ENCODE measurements at regions of chr10 and their contacts with region 1.

Region 1: DNA sequence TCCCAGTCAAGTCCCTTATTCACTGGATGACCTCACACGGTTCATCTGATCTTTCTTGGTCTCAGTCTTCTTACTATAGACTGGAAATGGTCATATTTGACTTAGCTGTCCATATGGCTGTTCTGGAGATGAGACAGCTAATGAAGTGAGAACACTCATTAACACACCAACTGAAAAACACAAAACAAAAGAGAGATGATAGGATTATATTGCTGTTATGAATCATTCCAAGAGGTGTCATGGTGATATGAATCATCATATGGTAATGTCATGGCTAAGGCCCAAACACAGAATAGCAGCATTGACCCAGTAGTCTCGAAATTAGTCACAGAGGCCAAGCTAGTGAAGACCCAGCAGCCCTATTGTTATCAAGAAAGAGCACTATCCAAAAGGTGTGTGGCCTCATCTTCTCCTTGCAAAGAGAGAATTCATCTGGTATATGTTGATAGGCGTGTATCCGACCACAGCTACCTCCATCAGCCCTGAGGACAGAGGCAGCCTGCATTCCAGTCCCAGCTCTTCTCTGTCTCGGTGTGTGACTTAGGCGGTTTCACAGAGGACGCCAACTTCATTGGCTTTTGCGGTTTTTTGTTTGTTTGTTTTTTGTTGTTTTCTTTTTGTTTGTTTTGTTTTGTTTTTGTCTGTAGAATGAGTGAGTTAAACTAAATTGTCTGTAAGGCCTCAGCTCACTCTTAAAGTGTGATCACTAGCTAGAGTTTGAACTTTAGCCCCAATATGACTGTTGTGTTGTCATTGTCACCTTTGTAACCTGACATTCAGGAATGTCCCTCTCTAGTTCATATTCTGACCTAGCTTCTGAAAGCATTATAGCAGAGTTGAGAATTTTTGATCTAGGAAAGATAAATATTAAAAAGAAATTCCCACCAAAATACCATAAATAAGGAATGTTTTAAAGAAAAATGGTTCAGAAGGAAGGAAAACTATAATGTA is 97.4 kb upstream of the PDCD4 start:
- DNase-seq: peak in 1 of 9 donors; percentile 54
- ATAC-seq: peak; percentile 41
- H3K4me3 ChIP-seq: no peak overlapping the region
- H3K4me3 Mint-ChIP-seq: peak overlapping the region in 1 of 10 donors; percentile 42
- H3K27ac ChIP-seq: no peak overlapping the region
- H3K27ac Mint-ChIP-seq: peak overlapping the region in 2 of 9 donors; percentile 47 to 88
- H3K4me1 ChIP-seq: peaks cover 0 to 11% of the 10 kb centered on the region in 2 donors
- H3K4me1 Mint-ChIP-seq: peaks cover 2 to 39% (median 9%) of the 10 kb centered on the region in 7 donors
- H3K27me3 ChIP-seq: no peaks in the 10 kb centered on the region
- H3K27me3 Mint-ChIP-seq: peaks cover 0 to 3% (median 0%) of the 10 kb centered on the region in 5 donors

Region 2: GRCh38 chr10:110664483-110665420 is 109.6 kb before region 1 on chr10:
- CTCF ChIA-PET with region 1: no interaction called
- POLR2A ChIA-PET with region 1: no interaction called
- intact Hi-C with region 1: no loop called
- DNase-seq: no peak
- ATAC-seq: no peak
- H3K4me3 ChIP-seq: no peak overlapping the region
- H3K4me3 Mint-ChIP-seq: no peak overlapping the region
- H3K27ac ChIP-seq: no peak overlapping the region
- H3K27ac Mint-ChIP-seq: peak overlapping the region in 1 of 9 donors; percentile 11
- H3K4me1 ChIP-seq: no peaks in the 10 kb centered on the region
- H3K4me1 Mint-ChIP-seq: peaks cover 3 to 12% (median 5%) of the 10 kb centered on the region in 7 donors
- H3K27me3 ChIP-seq: no peaks in the 10 kb centered on the region
- H3K27me3 Mint-ChIP-seq: peaks cover 0 to 57% (median 3%) of the 10 kb centered on the region in 5 donors

Region 3: DNA sequence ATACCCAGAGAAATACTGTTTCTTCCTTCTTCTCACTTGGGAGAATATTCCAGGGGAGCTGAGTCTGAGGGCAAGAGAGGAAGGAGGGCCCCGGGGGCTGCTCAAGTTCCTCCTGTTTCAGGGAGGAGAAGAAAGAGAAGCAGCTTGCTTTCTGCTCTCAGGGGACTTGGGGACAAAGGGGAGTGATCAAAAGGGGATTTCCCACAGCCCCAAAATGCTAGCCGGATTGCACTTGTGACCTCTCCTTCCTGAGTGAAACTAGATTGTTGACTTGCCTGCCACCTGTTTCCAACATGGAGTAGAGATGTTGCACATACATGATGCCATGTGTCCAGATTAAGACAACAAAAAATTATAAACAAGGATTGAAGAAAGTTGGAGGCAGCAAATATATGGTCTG is 68.7 kb after region 1 on chr10:
- CTCF ChIA-PET with region 1: no interaction called
- POLR2A ChIA-PET with region 1: no interaction called
- intact Hi-C with region 1: loop called in 1 of 2 experiments (anchors 2 kb)
- DNase-seq: peak in 7 of 9 donors; percentile 35 to 60 (median 46)
- ATAC-seq: peak; percentile 88
- H3K4me3 ChIP-seq: no peak overlapping the region
- H3K4me3 Mint-ChIP-seq: peak overlapping the region in 8 of 10 donors; percentile 1 to 67 (median 42)
- H3K27ac ChIP-seq: peak overlapping the region; percentile 40
- H3K27ac Mint-ChIP-seq: peak overlapping the region; percentile 79 to 98 (median 89)
- H3K4me1 ChIP-seq: peaks cover 22 to 27% of the 10 kb centered on the region in 2 donors
- H3K4me1 Mint-ChIP-seq: peaks cover 36 to 67% (median 54%) of the 10 kb centered on the region in 7 donors
- H3K27me3 ChIP-seq: no peaks in the 10 kb centered on the region
- H3K27me3 Mint-ChIP-seq: no peaks in the 10 kb centered on the region